ENCODE measurements at regions of chr3 and their contacts with region 1.

Region 1: GRCh38 chr3:157081681-157082210 is 78.2 kb downstream of the CCNL1 start:
- DNase-seq: peak; percentile 70 to 92 (median 80)
- ATAC-seq: peak; percentile 93 to 96
- H3K4me3 Mint-ChIP-seq: peak overlapping the region in 2 of 10 donors; percentile 24 to 26
- H3K27ac Mint-ChIP-seq: peak overlapping the region; percentile 7 to 79 (median 61)
- H3K4me1 Mint-ChIP-seq: peaks cover 0 to 16% (median 11%) of the 10 kb centered on the region in 4 donors
- H3K27me3 Mint-ChIP-seq: no peaks in the 10 kb centered on the region

Region 2: GRCh38 chr3:157130467-157131251 is 48.9 kb after region 1 on chr3:
- POLR2A ChIA-PET with region 1: interaction called, 18 read pairs
- DNase-seq: peak; percentile 54 to 92 (median 78)
- ATAC-seq: peak; percentile 64 to 74
- H3K4me3 Mint-ChIP-seq: peak overlapping the region; percentile 57 to 84 (median 72)
- H3K27ac Mint-ChIP-seq: peak overlapping the region; percentile 93 to 98 (median 98)
- H3K4me1 Mint-ChIP-seq: peaks cover 39 to 70% (median 66%) of the 10 kb centered on the region in 4 donors
- H3K27me3 Mint-ChIP-seq: no peaks in the 10 kb centered on the region

Measured in naive thymus-derived CD8-positive, alpha-beta T cell (primary cell).